Activated CD8-positive, alpha-beta memory T cell treated with anti-CD3 and anti-CD28 coated beads, Interleukin-2, amount 10 ng/mL, durations not matched to agents 7 days and 5 days (primary cell): ENCODE measurements at regions of chr1 and their contacts with region 1.

Region 1: DNA sequence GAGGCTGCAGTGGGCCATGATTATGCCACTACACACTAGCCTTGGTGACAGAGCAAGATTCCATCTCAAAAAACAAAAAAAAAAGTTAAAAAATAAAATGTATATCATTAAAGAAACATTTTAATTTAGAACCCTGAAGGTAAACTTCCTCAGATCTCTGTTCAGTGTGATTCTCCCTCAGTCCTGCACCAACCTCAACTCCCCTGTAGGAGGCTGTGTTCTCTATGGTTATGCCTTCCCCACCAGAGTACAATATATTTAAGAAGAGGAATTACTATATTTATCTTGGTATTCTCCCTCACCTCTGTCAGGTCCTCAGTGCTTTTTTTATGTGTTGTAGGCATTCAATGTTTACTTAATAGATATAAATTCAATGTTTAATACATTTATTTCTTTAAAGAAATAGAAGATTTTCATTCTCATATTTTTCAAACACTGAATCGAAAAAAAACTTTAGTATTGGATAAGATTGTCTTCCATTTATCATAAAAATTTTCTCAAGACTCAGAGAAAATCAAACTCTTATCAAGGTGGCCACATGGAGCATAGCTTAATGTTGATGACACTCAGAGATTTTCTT is 4.8 kb upstream of the LRRC8B start:
- DNase-seq: peak; percentile 68
- ATAC-seq: peak; percentile 24
- H3K4me3 Mint-ChIP-seq: no peak overlapping the region
- H3K27ac Mint-ChIP-seq: no peak overlapping the region
- H3K4me1 Mint-ChIP-seq: peaks cover 23% of the 10 kb centered on the region
- H3K27me3 Mint-ChIP-seq: no peaks in the 10 kb centered on the region

Region 2: GRCh38 chr1:89598450-89599331 is 78.8 kb after region 1 on chr1:
- CTCF ChIA-PET with region 1: interaction called, 14 read pairs
- DNase-seq: no peak
- ATAC-seq: peak; percentile 68
- H3K4me3 Mint-ChIP-seq: no peak overlapping the region
- H3K27ac Mint-ChIP-seq: peak overlapping the region; percentile 62
- H3K4me1 Mint-ChIP-seq: peaks cover 59% of the 10 kb centered on the region
- H3K27me3 Mint-ChIP-seq: no peaks in the 10 kb centered on the region